ENCODE measurements at regions of chr7 and their contacts with region 1.

Region 1: DNA sequence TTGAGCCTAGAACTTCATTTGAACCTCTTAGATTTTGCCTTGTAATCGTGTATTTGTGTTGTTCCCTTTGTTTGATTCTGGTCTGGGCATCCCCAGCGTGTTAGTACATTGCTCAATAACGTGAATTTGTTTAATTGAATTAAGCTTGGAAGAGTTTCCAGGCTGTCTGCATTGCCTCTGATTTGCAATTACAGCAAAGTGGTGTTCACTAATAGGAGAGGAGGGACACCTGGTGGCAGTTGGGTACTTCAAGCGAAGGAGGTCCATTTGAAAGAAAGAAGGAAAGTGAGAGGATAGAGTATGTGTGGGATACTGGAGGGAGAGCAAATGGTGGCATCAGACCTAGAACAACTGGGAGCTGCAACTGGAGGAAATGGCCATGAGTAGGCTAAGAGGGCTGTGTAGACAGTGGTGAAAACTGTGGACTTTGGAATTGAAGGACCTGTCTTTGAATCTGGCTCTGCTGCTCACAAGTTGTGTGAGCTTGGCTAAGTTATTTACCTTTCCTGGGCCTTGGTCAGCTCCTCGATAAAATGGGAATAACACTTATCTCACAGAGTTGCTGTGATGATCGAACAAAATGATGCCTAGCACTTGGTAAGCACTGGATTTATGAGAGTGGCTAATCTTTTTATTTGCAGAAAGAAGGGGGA is 15.1 kb downstream of the LSMEM1 start:
- DNase-seq: peak; percentile 63
- H3K4me3 Mint-ChIP-seq: no peak overlapping the region
- H3K27ac Mint-ChIP-seq: no peak overlapping the region
- H3K4me1 Mint-ChIP-seq: peaks cover 9% of the 10 kb centered on the region
- H3K27me3 Mint-ChIP-seq: peaks cover 28% of the 10 kb centered on the region
- CTCF ChIP-seq: peak; percentile 39

Region 2: GRCh38 chr7:111741811-111742240 is 754.1 kb before region 1 on chr7:
- CTCF ChIA-PET with region 1: interaction called, 9 read pairs
- intact Hi-C with region 1: loop called (anchors 1 kb)
- DNase-seq: peak; percentile 51
- H3K4me3 Mint-ChIP-seq: no peak overlapping the region
- H3K27ac Mint-ChIP-seq: no peak overlapping the region
- H3K4me1 Mint-ChIP-seq: peaks cover under 1% of the 10 kb centered on the region
- H3K27me3 Mint-ChIP-seq: no peaks in the 10 kb centered on the region
- CTCF ChIP-seq: peak; percentile 45

Region 3: DNA sequence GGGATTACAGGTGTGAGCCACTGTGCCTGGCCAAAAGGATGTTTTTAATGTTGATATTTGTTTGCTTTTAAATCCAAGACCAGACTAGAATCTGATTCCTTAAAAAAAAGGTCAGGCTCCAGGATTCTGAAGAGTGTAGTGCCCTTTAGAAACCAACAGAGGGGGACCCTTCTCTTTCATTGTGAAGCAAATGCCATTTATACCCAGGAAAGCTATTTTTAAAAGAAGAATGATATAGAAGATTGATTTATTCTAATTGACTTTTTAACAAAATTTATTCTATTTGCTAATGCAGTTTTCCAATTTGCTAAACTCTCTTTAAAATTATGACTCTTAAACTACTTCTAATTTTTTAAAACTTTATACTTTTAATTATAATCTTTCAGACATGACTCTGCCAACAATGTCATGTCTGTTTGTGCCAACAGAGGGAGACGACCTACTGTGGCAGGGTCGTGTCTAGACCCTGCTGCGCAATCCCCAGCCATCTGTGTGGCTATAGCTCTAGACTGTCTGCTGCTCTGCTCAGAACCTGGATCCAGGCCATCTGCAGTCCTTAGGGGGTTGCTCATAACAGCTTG is 732.6 kb before region 1 on chr7:
- CTCF ChIA-PET with region 1: interaction called, 9 read pairs
- intact Hi-C with region 1: loop called (anchors 1 kb)
- DNase-seq: no peak
- H3K4me3 Mint-ChIP-seq: no peak overlapping the region
- H3K27ac Mint-ChIP-seq: no peak overlapping the region
- H3K4me1 Mint-ChIP-seq: no peaks in the 10 kb centered on the region
- H3K27me3 Mint-ChIP-seq: no peaks in the 10 kb centered on the region
- CTCF ChIP-seq: peak; percentile 31

Region 4: GRCh38 chr7:111855161-111855856 is 640.6 kb before region 1 on chr7:
- CTCF ChIA-PET with region 1: interaction called, 4 read pairs
- intact Hi-C with region 1: loop called (anchors 5 kb)
- DNase-seq: peak; percentile 27
- H3K4me3 Mint-ChIP-seq: no peak overlapping the region
- H3K27ac Mint-ChIP-seq: no peak overlapping the region
- H3K4me1 Mint-ChIP-seq: peaks cover 14% of the 10 kb centered on the region
- H3K27me3 Mint-ChIP-seq: no peaks in the 10 kb centered on the region
- CTCF ChIP-seq: peak; percentile 26

Region 5: DNA sequence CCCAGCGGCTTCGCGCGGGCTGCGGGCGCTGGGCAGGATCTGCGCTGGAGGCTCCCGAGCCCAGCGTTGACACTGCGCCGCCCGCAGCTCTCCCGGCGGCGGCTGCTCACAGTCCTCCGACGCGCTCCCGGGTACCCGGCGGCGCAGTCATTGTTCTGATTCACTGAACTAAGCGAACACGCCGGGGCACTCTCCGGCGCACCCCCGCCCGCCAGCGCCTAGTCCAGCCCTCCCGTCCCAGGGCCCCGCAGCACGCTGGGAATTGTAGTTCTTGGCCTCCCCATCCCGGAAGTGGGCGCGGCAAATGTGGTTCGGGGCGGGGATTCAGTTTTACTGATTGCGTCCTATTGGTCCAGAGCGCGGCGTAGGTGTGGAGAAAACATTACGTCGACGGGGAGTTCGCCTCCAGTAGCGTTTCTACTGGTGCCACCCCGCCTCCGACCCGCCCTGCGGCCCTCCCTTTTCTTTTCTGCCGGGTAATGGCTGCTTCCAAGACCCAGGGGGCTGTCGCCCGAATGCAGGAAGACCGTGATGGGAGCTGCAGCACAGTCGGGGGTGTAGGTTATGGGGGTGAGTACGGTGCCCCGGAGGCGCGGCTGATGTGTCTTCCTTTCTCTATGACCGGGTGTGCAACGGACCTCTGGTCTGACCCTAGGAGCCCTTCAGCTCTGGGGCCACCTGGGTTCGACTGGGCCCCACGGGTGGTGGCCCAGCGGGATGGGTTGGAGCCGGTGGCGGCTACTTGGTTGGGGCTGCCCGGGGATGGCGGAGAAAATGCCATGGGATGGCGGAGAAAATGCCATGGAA is 289.5 kb before region 1 on chr7 and contains the starts of genes DOCK4 and ZNF277:
- CTCF ChIA-PET with region 1: no interaction called
- intact Hi-C with region 1: loop called (anchors 10 kb)
- DNase-seq: peak; percentile 97
- H3K4me3 Mint-ChIP-seq: peak within 1 kb of the TSS; percentile 96
- H3K27ac Mint-ChIP-seq: peak within 1 kb of the TSS; percentile 76
- H3K4me1 Mint-ChIP-seq: peaks cover 26% of the 10 kb centered on the region
- H3K27me3 Mint-ChIP-seq: peaks cover 26% of the 10 kb centered on the region
- CTCF ChIP-seq: no peak
- total RNA-seq, gene DOCK4: 2.7 and 3.4 TPM in 2 replicates
- total RNA-seq, gene ZNF277: 18.1 and 18.4 TPM in 2 replicates

Region 6: DNA sequence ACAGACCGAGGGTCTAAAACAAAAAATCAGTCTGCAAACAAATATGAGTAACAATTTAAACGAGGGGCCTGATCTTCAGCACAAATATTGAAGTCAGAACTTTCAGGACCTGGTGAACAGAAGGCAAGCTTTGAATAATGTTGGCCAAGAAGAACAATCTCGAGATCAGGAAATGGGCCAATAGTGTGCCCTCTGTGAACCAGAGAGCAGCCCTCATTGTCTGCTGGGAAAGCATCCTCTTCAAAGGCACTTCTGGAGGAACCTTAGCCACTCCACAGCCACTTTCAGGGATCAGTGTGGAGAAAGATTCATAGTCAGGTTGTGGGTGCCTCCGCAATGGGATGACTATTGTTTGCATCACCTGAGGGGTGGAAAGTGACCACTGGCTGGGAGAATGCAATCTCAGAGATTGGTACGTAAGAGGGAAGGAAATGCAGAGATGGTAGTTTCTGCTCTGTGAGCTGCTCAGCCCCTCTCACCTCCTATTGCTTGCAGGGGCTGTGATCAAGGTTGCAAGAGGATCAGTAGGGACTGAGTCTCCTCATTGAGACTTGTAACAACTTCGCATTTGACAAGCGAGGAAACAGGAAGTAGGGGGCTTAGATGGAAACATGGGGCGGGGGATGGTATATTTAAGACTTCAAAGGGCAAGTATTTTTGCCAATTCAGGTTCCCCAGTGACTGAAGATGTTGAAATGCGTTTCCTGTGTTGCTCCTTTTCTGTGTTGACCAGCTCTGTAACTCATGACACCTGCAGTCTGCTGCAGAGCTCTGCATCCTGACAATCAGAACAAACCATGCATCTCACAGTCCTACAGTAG is 74.1 kb before region 1 on chr7:
- CTCF ChIA-PET with region 1: no interaction called
- intact Hi-C with region 1: no loop called
- DNase-seq: no peak
- H3K4me3 Mint-ChIP-seq: no peak overlapping the region
- H3K27ac Mint-ChIP-seq: no peak overlapping the region
- H3K4me1 Mint-ChIP-seq: peaks cover 25% of the 10 kb centered on the region
- H3K27me3 Mint-ChIP-seq: no peaks in the 10 kb centered on the region
- CTCF ChIP-seq: no peak